MCF 10A (cell line): ENCODE measurements at regions of chr11 and their contacts with region 1.

Region 1: DNA sequence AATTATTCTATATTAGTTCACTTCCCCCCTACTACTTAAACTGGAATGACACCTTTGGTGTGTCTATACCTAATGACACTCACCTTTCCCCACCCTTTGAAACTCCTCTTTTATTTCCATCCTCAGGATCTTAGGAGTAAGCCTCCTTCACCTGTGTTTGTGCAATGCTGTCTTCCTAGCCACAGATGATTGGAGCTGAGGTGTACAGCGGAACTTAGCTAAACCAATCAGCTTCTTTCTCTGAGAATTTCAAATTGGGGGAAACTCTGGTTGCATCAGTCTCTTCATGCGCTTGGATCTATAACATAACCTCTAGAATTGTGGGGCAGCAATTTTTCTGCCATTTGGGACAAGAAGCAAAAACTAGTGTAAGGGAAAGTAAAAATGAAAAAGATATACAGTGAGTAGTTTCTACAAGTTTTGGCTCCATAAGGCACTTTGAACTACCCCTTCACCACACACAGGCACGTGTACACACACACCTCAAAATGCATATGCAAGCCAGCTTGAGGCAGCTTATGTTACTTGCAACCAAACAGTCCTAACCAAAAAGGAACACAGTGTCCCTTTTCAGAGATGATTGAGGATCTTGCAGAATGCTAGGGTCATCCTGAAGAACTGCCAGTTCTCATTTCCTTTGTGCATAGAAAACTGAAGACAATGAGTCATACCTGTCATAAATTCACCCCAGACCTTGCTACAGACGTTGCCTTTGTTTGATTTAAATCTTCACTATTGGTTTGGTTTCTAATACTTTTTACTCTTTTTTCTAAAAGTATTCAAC is 36.0 kb upstream of the LDLRAD3 start:
- DNase-seq: peak; percentile 95
- H3K4me3 Mint-ChIP-seq: peak overlapping the region; percentile 12
- H3K27ac Mint-ChIP-seq: peak overlapping the region; percentile 99
- H3K4me1 Mint-ChIP-seq: peaks cover 57% of the 10 kb centered on the region
- H3K27me3 Mint-ChIP-seq: no peaks in the 10 kb centered on the region
- CTCF ChIP-seq: no peak

Region 2: GRCh38 chr11:35893796-35894475 is 13.9 kb before region 1 on chr11:
- CTCF ChIA-PET with region 1: interaction called, 4 read pairs
- POLR2A ChIA-PET with region 1: interaction called, 27 read pairs
- intact Hi-C with region 1: loop called (anchors 1 kb)
- DNase-seq: peak; percentile 97
- H3K4me3 Mint-ChIP-seq: peak overlapping the region; percentile 31
- H3K27ac Mint-ChIP-seq: peak overlapping the region; percentile 33
- H3K4me1 Mint-ChIP-seq: peaks cover 33% of the 10 kb centered on the region
- H3K27me3 Mint-ChIP-seq: no peaks in the 10 kb centered on the region
- CTCF ChIP-seq: no peak

Region 3: DNA sequence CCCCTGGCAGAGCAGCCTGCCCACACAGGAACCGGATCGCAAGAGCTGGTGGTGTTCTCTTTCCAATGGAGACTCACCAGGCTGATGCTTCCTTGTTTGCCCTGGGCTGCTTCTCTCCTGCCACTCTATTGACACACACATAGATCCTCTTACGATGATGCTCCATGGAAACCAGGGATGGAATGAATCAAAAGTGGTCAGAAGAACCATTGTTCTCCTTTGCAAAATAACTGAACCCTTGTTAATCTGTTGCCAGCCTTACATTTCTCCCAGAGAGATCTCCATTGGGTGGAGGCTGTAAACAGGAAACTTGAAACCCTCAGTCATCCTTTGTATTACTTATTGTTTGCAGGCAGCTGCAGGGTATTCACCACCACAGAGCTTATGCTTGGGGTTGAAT is 11.4 kb after region 1 on chr11:
- CTCF ChIA-PET with region 1: interaction called, 6 read pairs
- POLR2A ChIA-PET with region 1: interaction called, 66 read pairs
- intact Hi-C with region 1: no loop called
- DNase-seq: no peak
- H3K4me3 Mint-ChIP-seq: no peak overlapping the region
- H3K27ac Mint-ChIP-seq: no peak overlapping the region
- H3K4me1 Mint-ChIP-seq: peaks cover 29% of the 10 kb centered on the region
- H3K27me3 Mint-ChIP-seq: no peaks in the 10 kb centered on the region
- CTCF ChIP-seq: no peak

Region 4: GRCh38 chr11:35927730-35928129 is 19.9 kb after region 1 on chr11:
- CTCF ChIA-PET with region 1: interaction called, 8 read pairs
- POLR2A ChIA-PET with region 1: interaction called, 66 read pairs
- intact Hi-C with region 1: no loop called
- DNase-seq: peak; percentile 99
- H3K4me3 Mint-ChIP-seq: peak overlapping the region; percentile 29
- H3K27ac Mint-ChIP-seq: peak overlapping the region; percentile 91
- H3K4me1 Mint-ChIP-seq: peaks cover 18% of the 10 kb centered on the region
- H3K27me3 Mint-ChIP-seq: no peaks in the 10 kb centered on the region
- CTCF ChIP-seq: no peak

Region 5: GRCh38 chr11:35932681-35933319 is 25.0 kb after region 1 on chr11:
- CTCF ChIA-PET with region 1: interaction called, 4 read pairs
- POLR2A ChIA-PET with region 1: interaction called, 66 read pairs
- intact Hi-C with region 1: no loop called
- DNase-seq: no peak
- H3K4me3 Mint-ChIP-seq: peak overlapping the region; percentile 48
- H3K27ac Mint-ChIP-seq: peak overlapping the region; percentile 84
- H3K4me1 Mint-ChIP-seq: peaks cover 16% of the 10 kb centered on the region
- H3K27me3 Mint-ChIP-seq: no peaks in the 10 kb centered on the region
- CTCF ChIP-seq: no peak

Region 6: DNA sequence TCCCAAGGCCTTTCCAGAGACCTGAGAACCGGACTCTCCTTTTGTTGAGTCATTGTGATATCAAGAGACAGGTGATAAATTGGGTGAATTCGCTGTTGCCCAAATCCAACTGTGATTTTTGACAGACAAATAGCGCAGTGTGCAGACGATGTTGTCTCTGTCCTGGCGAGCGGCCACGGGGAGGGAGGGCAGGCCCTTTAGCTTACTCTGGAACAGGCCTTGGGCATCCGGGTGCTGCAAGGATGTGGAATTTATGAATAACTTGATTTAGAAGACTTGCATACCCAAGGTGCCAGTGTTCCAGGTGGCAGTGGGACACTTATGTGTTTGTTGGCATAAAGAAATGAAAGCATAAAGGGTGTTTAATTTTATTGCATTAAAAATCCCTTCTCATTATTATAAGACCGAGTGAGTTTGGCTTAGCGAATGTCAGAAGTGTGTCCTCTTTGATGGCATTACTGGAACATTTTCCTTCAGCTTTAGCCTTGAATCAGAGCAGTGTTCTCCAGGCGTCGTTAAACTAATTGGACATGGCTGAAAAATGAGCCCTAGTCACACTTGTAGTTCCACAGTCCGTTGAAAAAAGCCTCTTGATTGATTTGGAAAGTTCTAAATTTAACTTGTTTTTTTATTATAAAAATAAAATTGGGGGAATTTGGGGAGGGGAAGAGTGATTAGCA is 45.4 kb after region 1 on chr11:
- CTCF ChIA-PET with region 1: no interaction called
- POLR2A ChIA-PET with region 1: interaction called, 12 read pairs
- intact Hi-C with region 1: no loop called
- DNase-seq: peak; percentile 69
- H3K4me3 Mint-ChIP-seq: no peak overlapping the region
- H3K27ac Mint-ChIP-seq: peak overlapping the region; percentile 81
- H3K4me1 Mint-ChIP-seq: peaks cover 66% of the 10 kb centered on the region
- H3K27me3 Mint-ChIP-seq: no peaks in the 10 kb centered on the region
- CTCF ChIP-seq: no peak